ENCODE measurements at regions of chr10 and their contacts with region 1.

Region 1: DNA sequence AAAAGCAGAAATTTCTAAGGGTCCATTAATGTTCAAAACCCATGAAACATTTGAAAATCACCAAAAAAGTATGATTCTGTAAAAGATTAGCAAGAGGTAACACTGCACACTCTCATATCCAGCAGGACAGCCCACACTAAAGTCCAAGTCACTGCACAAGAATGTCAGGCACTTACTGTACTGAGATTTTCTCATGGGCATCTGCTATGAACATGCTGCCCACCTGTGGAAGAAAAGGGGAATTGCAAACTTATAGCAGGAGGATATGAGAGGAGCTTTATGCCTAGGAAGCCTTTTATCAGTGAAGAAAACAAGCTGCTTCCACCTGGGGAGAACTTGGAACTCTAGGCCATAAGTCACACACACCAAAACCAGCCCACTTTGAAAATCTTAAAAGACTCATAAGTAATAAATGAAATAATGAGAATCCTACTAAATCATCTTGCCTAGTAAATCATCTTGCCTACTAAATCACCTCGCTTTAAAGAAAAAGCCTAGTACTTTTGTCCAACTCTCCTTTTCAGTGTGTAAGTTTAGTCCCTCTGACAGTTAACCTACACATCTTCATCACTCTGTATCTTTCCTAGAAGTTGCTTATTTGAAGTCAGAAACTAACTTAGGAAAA is 46.1 kb downstream of the ARMH3 start:
- DNase-seq: peak; percentile 86 to 88
- ATAC-seq: peak; percentile 98 to 99
- H3K4me3 ChIP-seq: no peak overlapping the region
- H3K27ac ChIP-seq: peak overlapping the region in 1 of 2 experiments; percentile 36; a peak in 2 of 6 replicates
- H3K4me1 ChIP-seq: peaks cover 6% of the 10 kb centered on the region
- CTCF ChIP-seq: peak; percentile 98
- EP300 ChIP-seq: no peak
- POLR2A ChIP-seq: no peak
- RAD21 ChIP-seq: peak; percentile 97 to 99

Region 2: DNA sequence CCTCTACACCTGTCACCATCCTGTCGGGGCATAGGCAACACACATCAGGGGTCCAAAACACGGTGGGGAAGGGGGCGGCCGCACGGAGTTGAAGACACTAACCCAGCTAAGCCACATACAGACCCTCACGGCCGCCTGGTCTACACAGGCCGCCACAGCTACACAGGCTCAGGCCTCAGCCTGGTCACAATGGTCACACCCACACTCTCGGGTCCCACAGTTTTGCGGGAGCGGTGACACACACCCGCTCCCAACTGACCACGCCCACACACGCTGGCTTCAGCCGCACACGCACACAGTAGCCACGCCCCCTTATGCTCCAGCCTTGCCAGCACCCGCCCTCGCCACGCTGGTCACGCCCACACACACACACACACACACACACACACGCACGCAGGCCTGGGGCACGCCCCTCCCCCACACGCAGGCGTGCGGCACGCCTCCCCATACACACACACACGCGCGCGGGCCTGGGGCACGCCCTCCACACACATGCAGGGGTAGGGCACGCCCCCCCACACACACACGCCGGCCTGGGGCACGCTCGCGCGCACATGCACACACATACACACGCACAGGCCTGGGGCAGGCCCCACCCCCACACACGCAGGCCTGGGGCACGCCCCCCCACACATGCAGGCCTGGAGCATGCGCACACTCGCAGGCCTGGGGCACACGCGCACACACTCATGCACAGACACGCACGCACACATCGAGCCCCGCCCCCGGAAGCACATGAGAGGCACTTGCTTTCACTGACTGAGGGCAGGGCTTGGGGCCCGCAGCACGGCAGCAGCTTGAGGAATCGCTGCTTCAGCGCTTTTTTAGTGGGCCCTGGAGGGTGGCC is 179.4 kb before region 1 on chr10:
- CTCF ChIA-PET with region 1: interaction called, 126 read pairs
- POLR2A ChIA-PET with region 1: no interaction called
- DNase-seq: peak; percentile 93 to 95
- ATAC-seq: peak; percentile 76 to 89
- H3K4me3 ChIP-seq: peak overlapping the region; percentile 53
- H3K27ac ChIP-seq: peak overlapping the region; percentile 84 to 94
- H3K4me1 ChIP-seq: peaks cover 18% of the 10 kb centered on the region
- CTCF ChIP-seq: no peak
- EP300 ChIP-seq: no peak
- POLR2A ChIP-seq: peak; percentile 45
- RAD21 ChIP-seq: no peak

Region 3: DNA sequence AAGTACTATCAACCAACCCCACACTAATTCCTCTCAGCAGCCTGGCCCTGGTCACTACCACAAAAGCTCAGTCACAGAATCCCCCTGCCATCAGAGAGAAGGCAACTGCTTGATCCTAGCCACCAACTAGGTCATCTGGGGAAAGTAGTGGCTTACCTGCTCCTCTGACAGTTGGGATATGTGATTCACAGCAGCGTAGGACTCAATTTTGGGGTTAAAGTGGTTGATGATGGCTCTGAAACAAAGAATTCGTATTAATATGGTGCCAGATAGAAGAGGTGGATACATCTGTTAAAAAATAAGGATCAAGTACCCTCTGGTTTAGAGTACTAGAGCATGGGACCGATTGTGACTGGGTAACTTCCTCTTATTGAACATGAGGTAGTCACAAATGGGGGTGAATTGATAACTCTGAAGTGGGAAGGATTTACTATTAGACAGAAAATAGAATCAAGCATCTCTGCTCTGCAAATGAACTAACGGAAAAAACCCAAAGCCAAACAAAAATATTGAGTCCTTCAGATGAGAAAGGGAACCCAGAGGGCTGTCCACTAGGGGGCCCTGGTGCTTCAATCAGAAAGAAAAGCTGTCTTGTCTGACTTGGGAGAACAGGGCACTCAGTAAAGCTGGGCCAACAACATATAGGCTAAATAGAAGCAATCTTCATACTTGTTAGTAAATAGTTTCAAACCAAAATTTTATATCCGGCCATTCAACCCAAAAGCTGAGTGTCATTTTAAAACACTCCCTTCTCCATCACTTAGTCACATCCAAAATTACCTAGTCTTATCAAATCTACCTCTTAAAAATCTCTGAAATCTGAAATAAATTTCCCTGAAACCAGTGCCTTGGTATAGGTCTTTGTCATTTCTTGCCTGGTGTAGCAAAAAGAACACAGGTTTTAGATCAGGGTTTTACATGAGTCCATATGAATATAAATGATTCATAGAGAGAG is 120.4 kb before region 1 on chr10:
- CTCF ChIA-PET with region 1: interaction called, 211 read pairs
- POLR2A ChIA-PET with region 1: no interaction called
- DNase-seq: peak; percentile 69 to 73
- ATAC-seq: peak; percentile 93; a peak in 5 of 6 replicates
- H3K4me3 ChIP-seq: no peak overlapping the region
- H3K27ac ChIP-seq: peak overlapping the region; percentile 31 to 65; a peak in 2 of 6 replicates
- H3K4me1 ChIP-seq: peaks cover 12% of the 10 kb centered on the region
- CTCF ChIP-seq: peak; percentile 93
- EP300 ChIP-seq: no peak
- POLR2A ChIP-seq: no peak
- RAD21 ChIP-seq: peak; percentile 83 to 89

Region 4: DNA sequence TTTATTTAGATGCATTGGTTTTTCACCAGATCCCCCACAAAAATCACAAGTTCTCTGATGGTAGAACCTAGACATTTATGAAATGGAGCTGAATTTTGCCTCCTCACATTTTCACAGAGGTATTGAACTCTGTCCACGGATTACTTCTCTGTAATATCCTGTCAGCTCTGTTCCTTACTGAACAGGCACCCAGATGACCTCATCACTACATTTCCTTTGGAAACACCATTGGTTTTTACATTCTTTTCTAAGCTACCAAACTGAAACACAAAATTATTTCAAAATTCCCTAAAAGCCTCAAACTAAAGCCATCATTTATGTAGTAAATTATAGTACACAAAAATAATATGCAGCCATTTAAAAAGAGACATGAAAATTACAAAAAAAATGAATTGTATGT is 68.0 kb before region 1 on chr10:
- CTCF ChIA-PET with region 1: interaction called, 10 read pairs
- POLR2A ChIA-PET with region 1: no interaction called
- DNase-seq: no peak
- ATAC-seq: no peak
- H3K4me3 ChIP-seq: no peak overlapping the region
- H3K27ac ChIP-seq: no peak overlapping the region
- H3K4me1 ChIP-seq: peaks cover 51% of the 10 kb centered on the region
- CTCF ChIP-seq: no peak
- EP300 ChIP-seq: no peak
- POLR2A ChIP-seq: no peak
- RAD21 ChIP-seq: no peak

Region 5: GRCh38 chr10:101986625-101986973 is 23.3 kb before region 1 on chr10:
- CTCF ChIA-PET with region 1: interaction called, 19 read pairs
- POLR2A ChIA-PET with region 1: no interaction called
- DNase-seq: no peak
- ATAC-seq: no peak
- H3K4me3 ChIP-seq: no peak overlapping the region
- H3K27ac ChIP-seq: no peak overlapping the region
- H3K4me1 ChIP-seq: no peaks in the 10 kb centered on the region
- CTCF ChIP-seq: no peak
- EP300 ChIP-seq: no peak
- POLR2A ChIP-seq: no peak
- RAD21 ChIP-seq: no peak

Region 6: DNA sequence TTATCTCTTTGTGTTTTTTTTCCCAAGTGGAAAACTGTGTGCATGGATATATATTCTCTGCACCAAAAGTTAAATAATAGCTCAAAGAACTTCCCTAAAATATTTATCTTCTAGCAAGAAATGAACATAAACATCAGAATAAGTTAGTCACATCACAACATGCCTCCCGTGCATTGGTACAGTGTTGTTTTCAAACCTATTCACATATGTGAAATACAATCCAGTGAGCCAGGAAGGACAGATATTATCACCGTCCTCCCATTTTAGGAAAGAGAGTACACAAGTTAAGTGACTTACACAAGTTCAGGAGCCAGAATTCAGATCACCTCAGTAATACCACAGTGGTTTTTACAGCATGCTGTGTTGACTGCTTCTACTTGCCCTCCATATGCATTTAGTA is 23.9 kb after region 1 on chr10:
- CTCF ChIA-PET with region 1: interaction called, 23 read pairs
- POLR2A ChIA-PET with region 1: no interaction called
- DNase-seq: no peak
- ATAC-seq: no peak
- H3K4me3 ChIP-seq: no peak overlapping the region
- H3K27ac ChIP-seq: no peak overlapping the region
- H3K4me1 ChIP-seq: no peaks in the 10 kb centered on the region
- CTCF ChIP-seq: no peak
- EP300 ChIP-seq: no peak
- POLR2A ChIP-seq: no peak
- RAD21 ChIP-seq: no peak

Region 7: DNA sequence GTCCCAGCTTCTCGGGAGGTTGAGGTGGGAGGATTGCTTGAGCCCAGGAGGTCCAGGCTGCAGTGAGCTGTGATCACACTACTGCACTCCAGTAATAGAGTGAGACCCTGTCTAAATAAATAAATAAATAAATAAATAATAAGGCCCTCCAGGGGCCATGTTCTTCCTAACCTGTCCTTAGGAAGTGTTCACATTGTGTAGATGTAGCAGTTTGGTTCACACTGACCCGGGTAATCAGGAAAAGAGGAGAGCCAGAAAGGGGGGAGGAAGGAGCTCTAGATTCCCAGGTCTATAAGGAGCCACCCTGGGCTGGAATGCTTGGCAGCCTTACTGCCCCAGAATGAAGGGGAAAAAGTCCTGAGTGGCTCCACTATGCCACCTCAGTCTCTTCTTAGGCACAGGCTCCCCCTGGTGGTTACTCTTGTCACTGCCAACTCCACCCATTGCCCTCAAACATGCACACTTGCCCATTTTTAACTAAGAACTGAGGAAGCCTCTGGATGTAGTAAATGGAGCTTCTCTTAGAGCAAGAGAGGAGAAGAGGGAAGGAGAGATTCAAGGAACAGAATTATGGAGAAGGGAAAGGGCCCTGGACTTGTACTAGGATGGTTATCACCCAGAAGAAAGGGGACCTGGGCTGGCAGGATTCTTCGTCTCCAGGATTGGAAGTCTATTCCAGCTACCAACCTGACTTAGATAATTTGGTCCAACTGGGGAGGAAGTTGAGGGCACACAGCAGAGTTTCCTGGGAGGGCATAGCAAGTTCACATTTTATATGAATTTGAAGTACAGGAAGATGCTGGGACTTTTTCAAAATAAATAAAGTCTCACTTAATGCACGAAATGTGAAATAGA is 63.0 kb after region 1 on chr10:
- CTCF ChIA-PET with region 1: interaction called, 35 read pairs
- POLR2A ChIA-PET with region 1: no interaction called
- DNase-seq: peak; percentile 81 to 82
- ATAC-seq: peak; percentile 91 to 96
- H3K4me3 ChIP-seq: no peak overlapping the region
- H3K27ac ChIP-seq: no peak overlapping the region
- H3K4me1 ChIP-seq: 0 out of 3 replicates have a peak, but pooled peaks cover 2% of the 10 kb centered on the region
- CTCF ChIP-seq: peak; percentile 89
- EP300 ChIP-seq: no peak
- POLR2A ChIP-seq: no peak
- RAD21 ChIP-seq: peak; percentile 82 to 86

Region 8: DNA sequence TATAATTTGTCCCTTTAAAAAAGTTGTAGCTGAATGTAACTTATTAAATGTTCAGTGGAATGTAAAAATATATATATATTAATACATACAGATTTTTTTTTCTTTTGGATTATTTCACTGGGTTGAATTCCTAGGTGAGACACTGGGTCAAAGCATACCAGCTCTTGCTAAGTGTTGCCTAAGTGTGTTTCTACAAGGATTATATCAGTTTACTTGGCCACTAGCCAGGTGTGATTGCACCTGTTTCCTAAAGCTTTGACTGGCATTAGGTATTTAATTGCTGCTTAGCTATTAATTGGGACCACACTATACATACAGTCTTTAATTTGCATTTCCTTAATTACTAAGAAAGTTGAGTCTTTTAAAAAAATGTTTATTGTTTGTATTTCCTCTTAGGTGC is 210.7 kb after region 1 on chr10:
- CTCF ChIA-PET with region 1: no interaction called
- POLR2A ChIA-PET with region 1: no interaction called
- DNase-seq: no peak
- ATAC-seq: no peak
- H3K4me3 ChIP-seq: no peak overlapping the region
- H3K27ac ChIP-seq: no peak overlapping the region
- H3K4me1 ChIP-seq: peaks cover 3% of the 10 kb centered on the region; the same call in 2 of the 3 replicates
- CTCF ChIP-seq: no peak
- EP300 ChIP-seq: no peak
- POLR2A ChIP-seq: no peak
- RAD21 ChIP-seq: no peak